Esophagus squamous epithelium (tissue), 5 donors: ENCODE measurements at regions of chr1 and their contacts with region 1.

Region 1: DNA sequence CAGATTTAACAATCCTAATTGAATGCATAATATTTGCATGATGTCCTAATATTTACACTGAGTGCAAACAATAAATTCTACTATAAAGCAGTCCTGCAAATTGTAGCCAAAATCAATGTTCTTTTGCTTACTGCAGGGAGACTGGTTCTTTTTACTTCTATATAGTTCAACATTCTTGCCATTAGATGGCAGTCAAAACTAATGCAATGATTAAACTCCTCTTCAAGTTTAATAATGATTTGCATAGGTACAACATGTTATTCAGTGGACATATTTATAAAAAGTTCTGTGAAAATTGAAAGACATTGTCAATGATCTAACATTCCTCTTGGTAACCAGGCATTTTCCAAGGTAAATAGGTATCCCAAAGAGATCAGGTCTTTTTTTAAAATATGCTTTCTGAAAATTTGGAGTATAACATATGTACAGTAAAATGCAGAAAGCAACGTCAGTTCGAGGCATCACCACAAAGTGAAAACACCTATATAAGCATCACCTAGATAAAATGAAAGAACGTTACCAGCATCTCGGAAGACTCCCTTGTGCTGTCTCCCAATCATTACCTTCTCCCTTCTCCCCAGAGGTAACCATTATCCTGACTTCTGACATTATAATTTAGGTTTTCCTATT is 9.8 kb upstream of the FNBP1L start:
- DNase-seq: no peak
- H3K4me3 ChIP-seq: no peak overlapping the region
- H3K27ac ChIP-seq: no peak overlapping the region
- H3K4me1 ChIP-seq: no peaks in the 10 kb centered on the region
- H3K27me3 ChIP-seq: peaks cover 0 to 16% (median 0%) of the 10 kb centered on the region in 4 donors
- CTCF ChIP-seq: peak; percentile 18 to 79 (median 63)
- POLR2A ChIP-seq: no peak

Region 2: DNA sequence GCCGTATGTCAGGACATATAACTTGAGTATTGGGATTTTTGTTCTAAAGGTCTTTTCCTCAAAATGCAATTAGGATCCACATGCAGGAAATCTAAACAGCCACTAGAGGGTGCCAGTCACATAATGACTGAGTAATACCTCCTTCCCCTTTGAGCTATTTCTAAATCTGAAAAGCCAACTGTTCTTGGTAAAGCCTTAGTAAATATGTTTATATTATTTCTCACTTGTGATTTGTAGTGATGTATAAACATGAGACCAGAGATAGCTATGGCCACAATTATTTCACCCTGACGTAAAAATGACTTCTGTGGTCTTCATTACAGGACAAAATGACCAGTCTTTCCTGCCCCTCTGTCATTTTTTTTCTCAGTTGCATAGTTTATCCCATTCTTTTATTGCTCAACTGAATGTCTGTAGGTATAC is 133.4 kb before region 1 on chr1:
- intact Hi-C with region 1: loop called (anchors 10 kb)
- DNase-seq: no peak
- H3K4me3 ChIP-seq: no peak overlapping the region
- H3K27ac ChIP-seq: no peak overlapping the region
- H3K4me1 ChIP-seq: no peaks in the 10 kb centered on the region
- H3K27me3 ChIP-seq: no peaks in the 10 kb centered on the region
- CTCF ChIP-seq: peak; percentile 68 to 93 (median 78)
- POLR2A ChIP-seq: no peak

Region 3: GRCh38 chr1:93619507-93620171 is 181.5 kb after region 1 on chr1:
- intact Hi-C with region 1: loop called (anchors 5 kb)
- DNase-seq: no peak
- H3K4me3 ChIP-seq: no peak overlapping the region
- H3K27ac ChIP-seq: no peak overlapping the region
- H3K4me1 ChIP-seq: peaks cover 17 to 51% (median 35%) of the 10 kb centered on the region in 3 donors
- H3K27me3 ChIP-seq: no peaks in the 10 kb centered on the region
- CTCF ChIP-seq: no peak
- POLR2A ChIP-seq: no peak

Region 4: DNA sequence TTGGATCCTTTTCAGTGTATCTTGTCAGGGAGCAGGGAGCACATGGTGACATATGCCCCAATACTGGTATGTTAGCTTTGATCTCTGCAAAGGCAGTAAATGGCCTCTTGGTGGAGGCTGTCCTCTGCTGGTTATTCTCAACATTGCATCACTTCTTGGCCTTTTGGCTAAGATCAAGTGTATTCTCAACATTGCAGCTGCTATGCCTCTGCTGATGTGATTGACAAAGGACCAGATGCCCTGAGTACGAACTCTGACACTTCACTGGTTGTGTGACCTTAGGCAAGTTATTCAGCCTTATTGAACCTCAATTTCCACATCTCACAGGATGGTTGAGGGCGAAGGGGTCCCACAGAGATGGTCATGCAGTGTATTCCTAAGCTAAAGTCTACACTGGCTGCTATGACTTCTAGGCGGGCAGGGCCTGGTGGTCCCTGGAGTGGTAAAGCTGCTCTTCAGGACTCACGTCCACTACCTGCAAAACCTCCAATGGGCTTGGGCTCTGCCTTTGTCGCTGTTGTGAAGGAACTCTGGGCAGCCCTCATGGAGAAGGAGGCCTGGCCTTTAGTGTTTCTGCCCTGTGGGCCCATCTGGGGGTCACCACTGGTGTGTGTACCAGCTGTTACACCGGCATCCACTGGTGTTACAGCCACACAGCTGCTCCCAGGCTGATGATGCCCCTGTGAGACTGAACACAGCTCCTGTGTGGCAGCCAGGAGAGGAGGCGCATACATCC is 376.1 kb after region 1 on chr1:
- intact Hi-C with region 1: loop called (anchors 10 kb)
- DNase-seq: no peak
- H3K4me3 ChIP-seq: no peak overlapping the region
- H3K27ac ChIP-seq: no peak overlapping the region
- H3K4me1 ChIP-seq: peaks cover 0 to 44% (median 0%) of the 10 kb centered on the region in 3 donors
- H3K27me3 ChIP-seq: no peaks in the 10 kb centered on the region
- CTCF ChIP-seq: peak; percentile 64 to 98 (median 93)
- POLR2A ChIP-seq: no peak